Activated CD8-positive, alpha-beta T cell treated with anti-CD3 and anti-CD28 coated beads for 36 hours (primary cell): ENCODE measurements at regions of chr16 and their contacts with region 1.

Region 1: GRCh38 chr16:30491744-30492308 is 19.3 kb downstream of the ITGAL start:
- DNase-seq: peak; percentile 24
- ATAC-seq: peak; percentile 64
- H3K4me3 Mint-ChIP-seq: no peak overlapping the region
- H3K27ac Mint-ChIP-seq: peak overlapping the region; percentile 76
- H3K4me1 Mint-ChIP-seq: peaks cover 39% of the 10 kb centered on the region
- H3K27me3 Mint-ChIP-seq: no peaks in the 10 kb centered on the region
- CTCF ChIP-seq: no peak

Region 2: DNA sequence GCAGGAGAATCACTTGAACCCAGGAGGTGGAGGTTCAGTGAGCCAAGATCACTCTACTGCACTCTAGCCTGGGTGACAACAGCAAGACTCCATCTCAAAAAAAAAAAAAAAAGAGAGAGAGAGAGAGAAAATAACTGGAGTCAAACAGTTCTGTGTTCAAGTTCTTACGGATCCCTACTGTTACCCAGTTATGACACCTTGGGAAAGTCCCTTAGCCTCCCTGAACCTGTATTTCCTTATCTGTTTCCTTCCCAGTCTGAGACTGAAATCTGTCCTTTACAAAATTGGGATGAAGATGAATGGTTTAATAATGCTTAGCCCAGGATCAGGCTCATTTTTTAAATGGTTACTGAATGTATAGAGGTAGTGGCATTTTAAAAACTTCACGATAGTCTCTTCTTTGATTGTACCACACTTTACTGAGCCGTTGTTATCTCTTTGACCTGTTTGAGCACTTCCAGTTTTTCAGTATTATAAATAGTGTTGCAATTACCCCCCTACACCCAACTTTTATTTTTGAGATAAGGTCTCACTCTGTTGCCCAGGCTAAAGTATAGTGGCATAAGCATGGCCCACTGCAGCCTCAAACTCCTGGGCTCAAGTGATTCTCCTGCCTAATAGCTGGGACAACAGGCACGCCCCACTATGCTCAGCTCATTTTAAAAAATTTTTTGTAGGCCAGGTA is 17.4 kb after region 1 on chr16:
- CTCF ChIA-PET with region 1: no interaction called
- POLR2A ChIA-PET with region 1: interaction called, 17 read pairs
- intact Hi-C with region 1: no loop called
- DNase-seq: no peak
- ATAC-seq: no peak
- H3K4me3 Mint-ChIP-seq: no peak overlapping the region
- H3K27ac Mint-ChIP-seq: peak overlapping the region; percentile 55
- H3K4me1 Mint-ChIP-seq: peaks cover 2% of the 10 kb centered on the region
- H3K27me3 Mint-ChIP-seq: no peaks in the 10 kb centered on the region
- CTCF ChIP-seq: no peak